ENCODE measurements at regions of chr10 and their contacts with region 1.

Region 1: GRCh38 chr10:48363617-48364355 is 57.3 kb downstream of the MAPK8 start:
- DNase-seq: peak; percentile 79
- H3K4me3 Mint-ChIP-seq: peak overlapping the region; percentile 2
- H3K27ac Mint-ChIP-seq: no peak overlapping the region
- H3K4me1 Mint-ChIP-seq: peaks cover 23% of the 10 kb centered on the region
- H3K27me3 Mint-ChIP-seq: no peaks in the 10 kb centered on the region
- CTCF ChIP-seq: peak; percentile 72

Region 2: GRCh38 chr10:48253970-48254657 is 109.7 kb before region 1 on chr10:
- CTCF ChIA-PET with region 1: no interaction called
- POLR2A ChIA-PET with region 1: no interaction called
- intact Hi-C with region 1: no loop called
- DNase-seq: peak; percentile 63
- H3K4me3 Mint-ChIP-seq: no peak overlapping the region
- H3K27ac Mint-ChIP-seq: peak overlapping the region; percentile 69
- H3K4me1 Mint-ChIP-seq: peaks cover 26% of the 10 kb centered on the region
- H3K27me3 Mint-ChIP-seq: no peaks in the 10 kb centered on the region
- CTCF ChIP-seq: no peak

Region 3: DNA sequence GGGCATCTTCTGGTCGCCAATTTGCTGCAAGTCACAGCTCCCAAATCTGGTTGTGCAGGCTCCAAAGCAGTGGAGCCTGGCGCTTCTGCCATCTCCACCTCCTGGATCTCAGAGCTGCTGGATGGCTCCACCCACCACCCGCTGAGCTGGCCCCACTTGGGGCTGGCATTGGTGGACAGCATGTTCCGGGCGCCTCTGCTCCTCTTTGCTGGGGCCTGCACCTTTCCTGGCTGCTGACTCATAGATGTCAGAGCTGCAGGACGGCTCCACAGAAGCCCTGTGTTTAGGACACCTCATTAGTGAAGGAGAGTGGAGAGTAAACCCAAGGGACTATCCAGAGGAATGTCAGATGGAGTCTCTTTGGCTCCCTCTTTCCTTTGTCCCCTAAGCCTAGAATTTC is 29.9 kb before region 1 on chr10:
- CTCF ChIA-PET with region 1: interaction called, 10 read pairs
- POLR2A ChIA-PET with region 1: no interaction called
- intact Hi-C with region 1: no loop called
- DNase-seq: peak; percentile 92
- H3K4me3 Mint-ChIP-seq: no peak overlapping the region
- H3K27ac Mint-ChIP-seq: peak overlapping the region; percentile 67
- H3K4me1 Mint-ChIP-seq: peaks cover 35% of the 10 kb centered on the region
- H3K27me3 Mint-ChIP-seq: no peaks in the 10 kb centered on the region
- CTCF ChIP-seq: no peak

Region 4: GRCh38 chr10:48444266-48444665 is 80.5 kb after region 1 on chr10:
- CTCF ChIA-PET with region 1: interaction called, 15 read pairs
- POLR2A ChIA-PET with region 1: interaction called, 3 read pairs
- intact Hi-C with region 1: loop called (anchors 1 kb)
- DNase-seq: peak; percentile 56
- H3K4me3 Mint-ChIP-seq: no peak overlapping the region
- H3K27ac Mint-ChIP-seq: no peak overlapping the region
- H3K4me1 Mint-ChIP-seq: peaks cover 6% of the 10 kb centered on the region
- H3K27me3 Mint-ChIP-seq: no peaks in the 10 kb centered on the region
- CTCF ChIP-seq: peak; percentile 28

Region 5: GRCh38 chr10:48551861-48552591 is 188.2 kb after region 1 on chr10:
- CTCF ChIA-PET with region 1: interaction called, 21 read pairs
- POLR2A ChIA-PET with region 1: no interaction called
- intact Hi-C with region 1: loop called (anchors 1 kb)
- DNase-seq: peak; percentile 53
- H3K4me3 Mint-ChIP-seq: no peak overlapping the region
- H3K27ac Mint-ChIP-seq: no peak overlapping the region
- H3K4me1 Mint-ChIP-seq: no peaks in the 10 kb centered on the region
- H3K27me3 Mint-ChIP-seq: no peaks in the 10 kb centered on the region
- CTCF ChIP-seq: peak; percentile 70

Region 6: GRCh38 chr10:48579251-48579960 is 215.6 kb after region 1 on chr10:
- CTCF ChIA-PET with region 1: no interaction called
- POLR2A ChIA-PET with region 1: no interaction called
- intact Hi-C with region 1: no loop called
- DNase-seq: no peak
- H3K4me3 Mint-ChIP-seq: no peak overlapping the region
- H3K27ac Mint-ChIP-seq: no peak overlapping the region
- H3K4me1 Mint-ChIP-seq: no peaks in the 10 kb centered on the region
- H3K27me3 Mint-ChIP-seq: no peaks in the 10 kb centered on the region
- CTCF ChIP-seq: no peak

Region 7: DNA sequence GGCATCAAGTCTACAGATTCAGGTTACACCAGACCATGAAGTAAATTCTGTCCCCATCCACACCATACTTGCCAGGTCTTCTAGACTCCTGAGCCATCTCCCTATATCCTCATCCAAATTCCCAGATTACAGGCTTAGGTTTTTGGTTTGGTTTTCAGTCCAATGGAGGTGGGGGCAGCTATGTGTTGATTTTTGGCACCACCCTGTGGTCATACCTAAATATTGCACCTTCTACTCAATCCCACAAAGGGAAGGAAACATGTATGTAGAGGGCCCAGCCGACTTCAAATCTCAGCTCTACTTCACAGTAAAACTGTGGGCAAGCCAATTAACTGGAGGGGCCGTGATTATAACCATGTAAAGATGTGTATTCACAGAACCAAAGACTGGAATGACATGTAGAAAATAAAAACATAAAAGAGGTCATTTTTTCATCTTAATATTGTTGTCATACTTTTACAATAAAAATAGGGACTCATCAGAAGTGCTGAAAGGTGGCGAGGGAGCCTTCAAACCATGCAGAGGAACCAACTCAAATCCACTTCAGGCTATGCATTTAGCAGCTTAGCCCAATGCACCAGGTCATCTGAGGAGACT is 1155.3 kb after region 1 on chr10:
- CTCF ChIA-PET with region 1: no interaction called
- POLR2A ChIA-PET with region 1: no interaction called
- intact Hi-C with region 1: loop called (anchors 10 kb)
- DNase-seq: peak; percentile 60
- H3K4me3 Mint-ChIP-seq: no peak overlapping the region
- H3K27ac Mint-ChIP-seq: no peak overlapping the region
- H3K4me1 Mint-ChIP-seq: peaks cover 5% of the 10 kb centered on the region
- H3K27me3 Mint-ChIP-seq: no peaks in the 10 kb centered on the region
- CTCF ChIP-seq: peak; percentile 66